ENCODE measurements at regions of chr1 and their contacts with region 1.

Region 1: DNA sequence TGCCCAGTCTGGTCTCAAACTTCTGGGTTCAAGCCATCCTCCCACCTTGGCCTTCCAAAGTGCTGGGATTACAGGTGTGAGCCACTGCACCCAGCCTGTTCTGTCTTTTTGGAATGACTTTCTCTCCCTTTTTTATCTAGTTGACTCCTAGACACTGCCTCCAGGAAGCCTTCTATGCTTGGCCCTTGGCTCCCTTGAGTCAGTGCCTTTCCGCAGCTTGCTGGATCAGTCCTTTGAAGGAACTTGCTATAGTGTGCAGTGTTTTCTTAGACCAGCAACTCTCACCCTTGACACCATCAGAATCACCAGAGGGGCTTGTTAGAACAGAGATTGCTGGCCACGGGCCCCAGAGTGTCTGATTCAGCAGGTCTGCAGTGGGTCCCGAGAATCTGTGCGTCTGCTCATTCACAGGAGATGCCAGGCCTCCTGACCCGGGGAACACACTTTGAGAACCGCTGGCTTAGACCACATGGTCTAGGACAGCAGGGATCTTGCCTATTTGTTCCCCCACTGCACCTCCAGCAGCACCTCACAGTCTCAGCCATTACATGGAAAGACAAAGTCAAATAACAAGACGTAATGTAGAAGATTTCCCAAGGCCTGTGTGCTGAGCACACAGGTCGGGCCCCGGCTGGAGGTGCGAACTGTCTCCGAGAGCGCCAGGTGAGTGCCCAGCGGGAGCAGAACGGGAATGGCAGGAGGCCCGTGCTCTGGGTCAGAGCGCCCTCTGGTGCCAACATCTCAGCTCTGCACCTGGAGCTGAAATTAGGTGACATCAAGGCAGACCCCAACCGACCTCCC is 27.4 kb upstream of the CTPS1 start:
- DNase-seq: peak; percentile 75
- H3K4me3 ChIP-seq: no peak overlapping the region
- H3K27ac ChIP-seq: no peak overlapping the region
- H3K4me1 ChIP-seq: no peaks in the 10 kb centered on the region
- H3K27me3 ChIP-seq: no peaks in the 10 kb centered on the region
- CTCF ChIP-seq: peak; percentile 83

Region 2: DNA sequence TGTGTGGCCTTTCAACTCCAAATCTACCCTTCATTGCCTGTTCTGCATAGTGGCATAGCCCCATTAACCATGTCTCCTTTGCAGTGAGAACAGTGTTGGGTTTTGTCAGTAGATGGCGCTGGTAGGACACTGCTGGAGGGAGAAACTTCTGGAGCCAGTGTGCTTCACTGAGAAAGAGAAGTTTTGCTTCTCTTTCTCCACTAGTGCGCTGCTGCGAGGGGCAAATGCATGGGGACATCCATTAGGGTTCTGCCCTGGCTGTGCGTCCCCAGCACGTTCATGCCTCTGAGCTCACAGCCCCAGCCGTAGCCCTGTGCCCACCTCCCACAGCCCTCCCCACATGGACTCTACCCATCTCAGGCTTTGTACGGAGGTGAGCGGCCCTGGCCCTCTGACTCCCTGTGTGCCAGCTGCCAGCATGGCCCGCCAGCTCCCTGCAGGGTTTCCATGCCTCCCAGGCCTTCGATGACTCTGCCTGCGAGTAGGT is 339.8 kb before region 1 on chr1:
- intact Hi-C with region 1: loop called (anchors 5 kb)
- DNase-seq: peak; percentile 88
- H3K4me3 ChIP-seq: no peak overlapping the region
- H3K27ac ChIP-seq: no peak overlapping the region
- H3K4me1 ChIP-seq: no peaks in the 10 kb centered on the region
- H3K27me3 ChIP-seq: no peaks in the 10 kb centered on the region
- CTCF ChIP-seq: peak; percentile 86

Region 3: GRCh38 chr1:40774266-40774998 is 177.7 kb before region 1 on chr1:
- intact Hi-C with region 1: loop called (anchors 5 kb)
- DNase-seq: peak; percentile 63
- H3K4me3 ChIP-seq: no peak overlapping the region
- H3K27ac ChIP-seq: no peak overlapping the region
- H3K4me1 ChIP-seq: no peaks in the 10 kb centered on the region
- H3K27me3 ChIP-seq: no peaks in the 10 kb centered on the region
- CTCF ChIP-seq: peak; percentile 82